ENCODE measurements at regions of chr11 and their contacts with region 1.

Region 1: GRCh38 chr11:47938791-47939560 is 41.4 kb upstream of the PTPRJ start:
- DNase-seq: no peak
- ATAC-seq: no peak
- H3K4me3 ChIP-seq: no peak overlapping the region
- H3K27ac ChIP-seq: no peak overlapping the region
- H3K4me1 ChIP-seq: peaks cover 51% of the 10 kb centered on the region
- H3K27me3 ChIP-seq: no peaks in the 10 kb centered on the region
- CTCF ChIP-seq: no peak
- EP300 ChIP-seq: no peak
- POLR2A ChIP-seq: no peak
- RAD21 ChIP-seq: no peak

Region 2: DNA sequence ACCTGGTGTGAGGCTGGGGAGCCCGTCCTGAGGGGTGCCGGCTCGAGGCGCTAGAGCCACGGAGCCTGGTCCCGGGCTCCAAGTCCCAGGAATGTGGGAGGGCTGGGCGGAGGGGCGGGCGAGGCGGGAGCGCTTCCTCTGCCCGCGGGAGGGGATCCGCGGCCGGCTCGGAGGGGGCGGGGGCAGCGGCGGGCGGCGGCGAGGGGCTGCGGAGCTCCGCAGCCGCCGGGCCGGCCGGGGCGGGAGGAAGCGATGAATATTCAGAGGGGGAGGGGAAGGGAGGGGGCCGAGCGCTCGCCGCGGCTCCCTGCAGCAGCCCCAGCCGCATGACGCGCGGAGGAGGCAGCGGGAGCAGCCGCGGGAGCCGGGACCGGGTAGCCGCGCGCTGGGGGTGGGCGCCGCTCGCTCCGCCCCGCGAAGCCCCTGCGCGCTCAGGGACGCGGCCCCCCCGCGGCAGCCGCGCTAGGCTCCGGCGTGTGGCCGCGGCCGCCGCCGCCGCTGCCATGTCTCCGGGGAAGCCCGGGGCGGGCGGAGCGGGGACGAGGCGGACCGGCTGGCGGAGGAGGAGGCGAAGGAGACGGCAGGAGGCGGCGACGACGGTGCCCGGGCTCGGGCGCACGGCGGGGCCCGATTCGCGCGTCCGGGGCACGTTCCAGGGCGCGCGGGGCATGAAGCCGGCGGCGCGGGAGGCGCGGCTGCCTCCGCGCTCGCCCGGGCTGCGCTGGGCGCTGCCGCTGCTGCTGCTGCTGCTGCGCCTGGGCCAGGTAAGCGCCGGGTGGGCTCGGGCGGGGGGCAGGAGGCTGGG is 41.5 kb after region 1 on chr11 and contains the start of gene PTPRJ:
- CTCF ChIA-PET with region 1: no interaction called
- POLR2A ChIA-PET with region 1: interaction called, 5 read pairs
- in situ Hi-C with region 1: no loop called
- intact Hi-C with region 1: loop called (anchors 5 kb)
- DNase-seq: no peak
- ATAC-seq: peak; percentile 70
- H3K4me3 ChIP-seq: peak within 1 kb of the TSS; percentile 62 to 69 (median 63)
- H3K27ac ChIP-seq: no peak within 1 kb of the TSS
- H3K4me1 ChIP-seq: peaks cover 34% of the 10 kb centered on the region
- H3K27me3 ChIP-seq: peaks cover 4 to 30% of the 10 kb centered on the region in 2 experiments
- CTCF ChIP-seq: 0 out of 2 replicates have a peak, but pooled peaks have one; percentile 13
- EP300 ChIP-seq: no peak
- POLR2A ChIP-seq: no peak
- RAD21 ChIP-seq: peak; percentile 16; the same call in 1 of the 2 replicates
- total RNA-seq, gene PTPRJ: 0.95 and 1.0 TPM in 2 replicates